PC-9 (cell line): ENCODE measurements at regions of chr11 and their contacts with region 1.

Region 1: GRCh38 chr11:102225689-102226568 is 91.4 kb upstream of the BIRC3 start:
- DNase-seq: peak; percentile 8 to 52
- H3K4me3 ChIP-seq: 0 out of 2 replicates have a peak overlapping the region, but pooled peaks have one; percentile 15
- H3K27ac ChIP-seq: peak overlapping the region; percentile 59
- H3K4me1 ChIP-seq: peaks cover 59% of the 10 kb centered on the region
- H3K27me3 ChIP-seq: no peaks in the 10 kb centered on the region
- CTCF ChIP-seq: no peak

Region 2: DNA sequence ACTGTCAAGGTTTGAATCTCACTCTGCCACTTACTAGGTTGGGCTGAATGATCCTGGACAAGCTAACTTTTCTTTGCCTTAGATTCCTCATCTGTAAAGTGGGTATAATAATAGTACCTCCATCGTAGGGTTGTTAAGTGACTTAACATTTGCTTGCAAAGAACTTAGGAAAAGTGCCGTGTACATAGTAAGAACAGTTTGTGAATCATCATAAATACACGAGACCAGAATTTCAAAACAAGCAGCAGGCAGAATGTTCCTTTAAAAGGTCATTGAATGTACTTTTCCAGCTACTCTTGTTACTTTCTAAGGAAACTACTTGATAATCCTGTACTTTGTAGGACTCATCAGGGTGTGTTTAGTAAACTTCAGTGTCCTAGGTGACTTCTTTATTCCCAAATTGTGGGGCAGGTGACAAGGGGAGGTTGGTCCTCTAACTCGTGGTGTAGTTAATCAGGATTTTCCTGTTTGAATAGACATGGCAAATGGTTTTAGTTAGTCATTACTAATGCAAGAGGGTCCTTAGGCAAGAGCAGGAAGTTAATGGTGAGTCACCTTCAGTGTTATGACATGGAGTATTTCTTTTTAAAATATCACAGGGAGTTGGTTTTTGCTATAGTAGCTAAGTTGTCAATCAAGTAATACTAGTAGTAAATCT is 47.8 kb before region 1 on chr11:
- CTCF ChIA-PET with region 1: interaction called, 3 read pairs
- POLR2A ChIA-PET with region 1: no interaction called
- intact Hi-C with region 1: loop called (anchors 2 kb)
- DNase-seq: peak; percentile 61 to 100
- H3K4me3 ChIP-seq: peak overlapping the region; percentile 10; the same call in 1 of the 2 replicates
- H3K27ac ChIP-seq: peak overlapping the region; percentile 88
- H3K4me1 ChIP-seq: peaks cover 41% of the 10 kb centered on the region
- H3K27me3 ChIP-seq: no peaks in the 10 kb centered on the region
- CTCF ChIP-seq: no peak

Region 3: GRCh38 chr11:102244681-102245409 is 18.9 kb after region 1 on chr11:
- CTCF ChIA-PET with region 1: no interaction called
- POLR2A ChIA-PET with region 1: interaction called, 4 read pairs
- intact Hi-C with region 1: loop called (anchors 2 kb)
- DNase-seq: peak; percentile 87 to 99
- H3K4me3 ChIP-seq: no peak overlapping the region
- H3K27ac ChIP-seq: peak overlapping the region; percentile 66
- H3K4me1 ChIP-seq: peaks cover 45% of the 10 kb centered on the region
- H3K27me3 ChIP-seq: no peaks in the 10 kb centered on the region
- CTCF ChIP-seq: no peak

Region 4: GRCh38 chr11:102254045-102254444 is 28.1 kb after region 1 on chr11:
- CTCF ChIA-PET with region 1: no interaction called
- POLR2A ChIA-PET with region 1: interaction called, 5 read pairs
- intact Hi-C with region 1: loop called (anchors 1 kb)
- DNase-seq: peak in 1 of 2 experiments; percentile 21
- H3K4me3 ChIP-seq: no peak overlapping the region
- H3K27ac ChIP-seq: no peak overlapping the region
- H3K4me1 ChIP-seq: peaks cover 24% of the 10 kb centered on the region
- H3K27me3 ChIP-seq: no peaks in the 10 kb centered on the region
- CTCF ChIP-seq: peak; percentile 48; the same call in 1 of the 2 replicates

Region 5: DNA sequence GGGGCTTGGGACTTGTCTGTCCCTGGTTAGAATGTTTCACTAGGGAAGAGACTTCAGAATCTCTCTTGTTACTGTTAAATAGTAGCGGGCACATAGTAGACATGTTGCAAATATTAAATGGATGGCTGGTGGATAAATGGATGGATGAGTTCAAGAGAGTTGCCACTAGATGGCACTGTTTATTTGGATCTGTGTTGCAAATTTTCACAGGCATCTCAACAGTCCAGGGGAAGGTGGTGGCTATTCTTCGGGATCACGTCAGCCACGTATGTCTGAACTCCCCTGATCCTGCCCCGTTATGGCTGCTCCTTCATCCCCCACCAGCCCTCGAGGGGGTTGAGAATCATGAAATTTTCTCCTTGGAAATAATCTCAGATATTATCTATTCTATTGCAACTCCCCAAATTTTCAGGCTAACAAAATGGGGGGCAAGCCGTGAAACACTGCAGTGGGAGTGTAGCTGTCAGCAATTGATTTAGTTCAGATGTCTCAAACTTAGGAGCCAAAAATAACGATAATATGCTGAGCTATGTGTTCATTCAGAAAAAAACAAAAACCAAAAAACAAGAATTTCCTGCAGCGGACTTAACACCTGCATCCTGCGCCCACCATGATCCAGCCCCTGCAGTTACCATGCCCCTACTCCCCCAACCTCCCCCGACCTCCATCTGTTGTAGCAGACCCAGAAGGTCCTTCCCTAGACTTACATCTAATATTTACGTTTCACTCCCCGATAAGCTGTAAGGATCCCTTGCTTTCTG is 62.2 kb after region 1 on chr11:
- CTCF ChIA-PET with region 1: no interaction called
- POLR2A ChIA-PET with region 1: no interaction called
- intact Hi-C with region 1: loop called (anchors 5 kb)
- DNase-seq: peak; percentile 38 to 67
- H3K4me3 ChIP-seq: no peak overlapping the region
- H3K27ac ChIP-seq: no peak overlapping the region
- H3K4me1 ChIP-seq: peaks cover 24% of the 10 kb centered on the region
- H3K27me3 ChIP-seq: no peaks in the 10 kb centered on the region
- CTCF ChIP-seq: peak; percentile 92